ENCODE measurements at regions of chr15 and their contacts with region 1.

Region 1: GRCh38 chr15:86247249-86247955 is 167.7 kb downstream of the AGBL1 start:
- DNase-seq: peak in 1 of 2 donors; percentile 28
- ATAC-seq: peak; percentile 43 to 58
- H3K4me3 ChIP-seq: peak overlapping the region in 1 of 4 donors; percentile 15
- H3K27ac ChIP-seq: peak overlapping the region in 3 of 4 donors; percentile 41 to 59 (median 49)
- H3K4me1 ChIP-seq: peaks cover 0 to 8% of the 10 kb centered on the region in 2 donors
- H3K27me3 ChIP-seq: no peaks in the 10 kb centered on the region
- CTCF ChIP-seq: no peak
- POLR2A ChIP-seq: no peak

Region 2: GRCh38 chr15:85865070-85865684 is 382.2 kb before region 1 on chr15:
- in situ Hi-C with region 1: loop called in 2 of 4 experiments (anchors 25 kb)
- intact Hi-C with region 1: loop called (anchors 10 kb)
- DNase-seq: no peak
- ATAC-seq: peak in 1 of 2 donors; percentile 74
- H3K4me3 ChIP-seq: no peak overlapping the region
- H3K27ac ChIP-seq: no peak overlapping the region
- H3K4me1 ChIP-seq: no peaks in the 10 kb centered on the region
- H3K27me3 ChIP-seq: no peaks in the 10 kb centered on the region
- CTCF ChIP-seq: peak; percentile 56 to 74 (median 66)
- POLR2A ChIP-seq: no peak

Region 3: GRCh38 chr15:86201313-86202008 is 45.9 kb before region 1 on chr15:
- in situ Hi-C with region 1: no loop called
- intact Hi-C with region 1: no loop called
- DNase-seq: no peak
- ATAC-seq: no peak
- H3K4me3 ChIP-seq: no peak overlapping the region
- H3K27ac ChIP-seq: no peak overlapping the region
- H3K4me1 ChIP-seq: peaks cover 4 to 9% of the 10 kb centered on the region in 2 donors
- H3K27me3 ChIP-seq: no peaks in the 10 kb centered on the region
- CTCF ChIP-seq: no peak
- POLR2A ChIP-seq: no peak

Region 4: GRCh38 chr15:86336051-86336788 is 88.8 kb after region 1 on chr15:
- in situ Hi-C with region 1: no loop called
- intact Hi-C with region 1: no loop called
- DNase-seq: no peak
- ATAC-seq: no peak
- H3K4me3 ChIP-seq: no peak overlapping the region
- H3K27ac ChIP-seq: no peak overlapping the region
- H3K4me1 ChIP-seq: no peaks in the 10 kb centered on the region
- H3K27me3 ChIP-seq: no peaks in the 10 kb centered on the region
- CTCF ChIP-seq: no peak
- POLR2A ChIP-seq: no peak

Measured in gastrocnemius medialis (tissue), 4 donors.